Head of caudate nucleus (tissue), 42 donors: ENCODE measurements at regions of chr7 and their contacts with region 1.

Region 1: DNA sequence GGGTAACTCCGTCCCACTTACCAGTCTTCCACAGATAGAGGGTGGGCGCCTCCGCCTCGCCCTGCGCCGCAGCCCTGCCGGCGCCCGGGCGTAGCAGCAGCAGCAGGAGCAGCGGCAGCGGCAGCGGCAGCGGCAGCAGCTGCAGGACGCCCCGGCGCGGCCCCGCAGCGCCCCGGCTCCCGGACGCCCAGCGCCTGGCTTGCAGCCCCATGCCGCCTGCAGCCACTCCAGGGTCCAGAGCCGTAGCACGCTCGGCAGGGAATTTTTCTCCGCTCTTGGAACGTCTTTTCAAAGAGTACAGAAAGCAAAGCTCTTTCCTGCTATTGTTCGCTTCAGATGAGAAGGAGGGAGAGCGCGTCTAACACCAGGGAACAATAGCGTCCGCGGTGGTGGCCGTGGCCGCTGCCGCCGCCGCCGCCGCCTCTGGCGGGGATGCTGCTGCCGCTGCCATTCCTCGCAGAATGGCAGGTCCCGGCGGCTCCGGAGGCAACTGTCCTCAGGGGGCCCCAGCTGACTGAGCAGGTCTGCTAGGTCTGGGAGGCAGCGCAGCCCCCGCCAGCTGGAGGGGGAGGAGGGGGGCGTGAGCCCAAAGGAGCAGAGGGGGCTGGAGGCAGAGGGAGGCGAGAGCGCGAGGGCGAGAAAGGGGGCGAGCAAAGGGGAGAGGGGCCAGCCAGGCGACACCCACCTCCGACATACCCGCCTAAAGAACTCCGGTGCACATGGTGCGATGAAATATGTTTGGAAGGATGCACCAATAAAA is at the start of gene THSD7A:
- DNase-seq: peak in 40 of 42 donors; percentile 21 to 76 (median 48)

Region 2: DNA sequence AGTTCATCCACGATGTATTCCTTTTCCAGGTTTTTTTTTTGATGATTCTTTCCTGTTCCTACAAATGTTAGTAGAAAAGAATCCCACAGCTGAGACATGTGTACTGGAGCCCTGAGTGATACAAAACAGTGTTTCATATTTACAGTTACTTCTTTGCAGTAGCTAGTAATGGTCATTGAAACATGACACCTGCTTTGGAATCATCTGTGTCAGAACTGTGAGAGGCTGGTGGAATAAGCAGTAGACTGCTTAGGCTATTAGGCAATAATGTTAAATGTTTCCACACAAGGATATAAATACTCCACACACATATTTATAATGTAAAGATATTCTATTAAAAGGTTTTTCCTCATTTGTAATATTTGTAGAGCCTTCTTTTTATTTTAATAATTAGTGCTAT is 393.9 kb before region 1 on chr7:
- intact Hi-C with region 1: loop called (anchors 10 kb)
- DNase-seq: no peak

Region 3: DNA sequence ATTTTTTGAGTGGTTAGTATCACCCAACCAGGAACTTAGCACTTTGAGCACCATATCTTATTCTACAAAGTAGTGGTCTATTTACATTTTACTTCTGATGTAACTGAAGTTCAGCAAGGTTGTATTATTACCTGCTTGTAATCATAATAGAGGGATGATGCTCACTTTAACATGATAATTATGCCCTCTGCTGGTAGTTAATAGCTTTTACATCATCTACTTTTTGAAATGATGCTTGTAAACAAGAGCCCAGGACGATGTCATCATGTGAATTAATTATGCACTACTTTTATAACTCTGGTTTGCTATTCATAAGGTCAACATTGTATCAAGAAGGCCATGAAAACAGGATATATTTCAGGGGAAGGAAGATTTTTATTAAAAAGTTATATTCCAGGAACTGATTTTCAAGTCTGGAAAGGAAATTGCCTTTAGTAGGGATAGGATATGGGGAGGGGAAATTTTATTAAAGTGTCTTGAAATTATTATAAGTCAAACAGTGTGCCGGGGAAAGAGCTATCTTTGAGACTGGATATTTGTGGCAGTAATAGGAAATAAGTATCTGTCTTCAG is 658.3 kb after region 1 on chr7:
- intact Hi-C with region 1: loop called (anchors 5 kb)
- DNase-seq: no peak